HEK293 (cell line): ENCODE measurements at regions of chr18 and their contacts with region 1.

Region 1: DNA sequence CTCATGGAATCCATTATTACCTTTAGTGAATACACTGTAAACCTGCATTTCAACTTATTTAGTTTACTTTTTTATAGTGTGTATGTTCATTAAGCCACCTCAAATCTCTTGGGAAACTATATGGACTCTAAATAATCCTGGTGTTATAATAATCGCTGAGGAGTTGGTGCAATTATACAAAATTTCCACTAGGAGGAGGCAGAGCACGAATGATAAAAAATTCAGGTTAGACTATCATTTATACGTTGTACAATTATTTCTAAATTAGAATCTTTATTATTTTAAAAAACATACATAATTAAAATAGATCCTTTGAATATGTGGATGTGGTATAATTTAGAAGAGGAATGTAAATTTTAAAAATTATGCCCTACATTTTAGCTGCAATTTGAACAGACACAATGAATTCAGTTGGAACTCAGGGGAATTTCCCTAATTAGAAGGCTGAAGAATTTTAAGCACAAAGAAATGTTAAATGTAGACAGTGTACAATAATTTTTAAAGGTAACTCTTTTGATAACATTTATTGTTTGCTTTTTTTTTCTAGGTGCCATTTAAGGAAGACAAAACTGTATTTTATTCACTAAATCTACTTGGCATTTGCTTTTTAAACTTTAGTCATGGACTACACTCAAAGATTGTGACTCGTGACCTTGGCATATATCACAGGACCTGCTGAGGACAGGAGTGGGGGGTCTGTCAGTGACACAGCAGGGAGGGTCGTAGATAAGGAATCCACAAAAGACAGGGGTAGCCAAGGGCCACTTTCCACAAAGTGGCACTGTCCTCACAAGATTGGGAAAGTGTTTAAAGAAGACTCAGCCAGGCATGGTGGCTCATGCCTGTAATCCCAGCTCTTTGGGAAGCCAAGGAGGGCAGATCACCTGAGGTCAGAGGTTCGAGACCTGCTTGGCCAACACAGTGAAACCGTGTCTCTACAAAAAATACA is 45.5 kb downstream of the RAB12 start:
- H3K4me3 ChIP-seq: no peak overlapping the region
- H3K27ac ChIP-seq: no peak overlapping the region
- H3K4me1 ChIP-seq: no peaks in the 10 kb centered on the region
- CTCF ChIP-seq: 0 out of 2 replicates have a peak, but pooled peaks have one; percentile 9

Region 2: DNA sequence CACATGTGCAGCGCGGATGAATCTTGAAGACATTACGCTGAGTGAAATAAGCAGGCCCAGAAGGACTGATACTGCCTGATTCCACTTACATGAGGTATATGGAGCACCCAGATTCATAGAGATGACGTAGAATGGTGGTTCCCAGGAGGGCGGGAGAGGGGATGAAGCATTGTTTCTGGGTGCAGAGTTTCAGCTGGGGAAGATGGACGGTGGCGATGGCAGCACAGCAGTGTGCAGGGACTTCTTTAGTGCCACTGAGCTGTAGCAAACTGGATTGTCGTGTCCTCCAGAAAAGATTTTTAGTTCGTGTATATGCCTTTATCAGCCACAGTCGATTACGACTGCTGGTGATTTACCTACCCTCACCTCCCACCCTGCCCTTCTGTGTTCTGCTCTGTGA is 15.0 kb before region 1 on chr18:
- CTCF ChIA-PET with region 1: interaction called, 17 read pairs
- POLR2A ChIA-PET with region 1: no interaction called
- H3K4me3 ChIP-seq: no peak overlapping the region
- H3K27ac ChIP-seq: no peak overlapping the region
- H3K4me1 ChIP-seq: no peaks in the 10 kb centered on the region
- CTCF ChIP-seq: no peak

Region 3: DNA sequence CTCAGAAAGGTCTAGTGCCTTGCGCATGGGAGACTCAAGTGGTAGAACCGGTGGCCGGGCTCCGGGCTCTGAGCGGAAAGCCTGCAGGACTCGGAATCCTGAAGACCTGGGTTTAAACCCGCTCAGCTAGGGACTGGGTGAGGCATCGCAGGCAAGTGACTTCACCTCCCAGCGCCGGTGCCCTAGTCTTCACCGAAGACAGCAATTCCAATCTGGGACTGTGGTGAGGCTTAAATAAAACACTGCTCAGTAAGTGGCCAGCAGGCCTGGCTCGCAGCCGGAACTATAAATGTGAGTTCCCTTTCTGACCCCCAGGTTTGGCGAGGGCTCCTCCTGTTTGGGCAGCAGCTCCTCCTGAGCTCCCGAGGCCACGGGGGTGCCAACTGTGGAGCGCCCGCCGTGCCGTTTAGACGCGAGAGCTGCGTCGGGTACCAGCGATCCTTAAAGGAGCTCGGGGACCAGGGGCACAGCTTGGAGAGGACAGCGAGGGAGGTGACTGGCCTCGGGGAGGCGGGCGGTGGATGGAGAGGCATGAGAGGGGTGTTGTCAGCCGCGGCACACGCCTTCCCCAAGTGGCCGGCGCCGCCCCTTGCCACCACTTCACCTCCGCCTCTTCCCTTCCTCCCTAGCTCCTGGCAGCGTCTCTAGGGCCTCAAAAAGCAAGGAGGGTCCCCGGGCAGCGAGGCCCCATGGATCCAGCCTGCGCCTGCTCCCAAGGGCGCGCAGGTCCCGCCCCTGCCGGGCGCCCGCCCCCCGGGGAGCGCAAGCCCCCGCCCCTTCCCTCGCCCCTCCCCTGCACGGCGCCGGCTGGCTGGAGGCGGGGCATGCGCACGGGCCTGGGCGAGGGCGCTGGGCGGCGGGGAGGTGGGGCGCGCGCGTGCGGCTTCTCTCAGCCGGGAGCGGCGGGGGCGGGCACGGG is 49.8 kb after region 1 on chr18:
- CTCF ChIA-PET with region 1: interaction called, 13 read pairs
- POLR2A ChIA-PET with region 1: interaction called, 3 read pairs
- H3K4me3 ChIP-seq: peak overlapping the region; percentile 43
- H3K27ac ChIP-seq: peak overlapping the region; percentile 57; the same call in 1 of the 2 replicates
- H3K4me1 ChIP-seq: peaks cover 6% of the 10 kb centered on the region
- CTCF ChIP-seq: peak; percentile 53; the same call in 1 of the 2 replicates

Region 4: DNA sequence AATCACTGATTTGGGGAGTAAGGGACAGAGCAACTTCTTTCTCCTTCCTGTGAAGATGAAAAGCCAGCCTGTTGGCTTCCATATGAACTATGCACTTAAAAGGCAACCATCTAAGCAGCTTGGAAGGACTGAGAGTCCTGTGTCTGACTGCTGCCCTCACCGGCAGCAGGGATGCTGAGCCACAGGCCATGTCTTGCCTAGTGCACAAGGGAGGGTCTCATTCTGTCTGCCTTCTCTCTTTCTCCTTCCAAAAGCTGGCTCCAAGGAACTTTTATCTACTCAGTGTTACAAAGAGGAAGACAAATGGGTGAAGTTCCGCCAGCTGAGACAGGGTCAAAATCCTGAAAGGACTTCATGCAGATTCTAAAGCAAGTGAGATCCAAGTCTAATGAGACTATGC is 196.9 kb after region 1 on chr18:
- CTCF ChIA-PET with region 1: no interaction called
- POLR2A ChIA-PET with region 1: no interaction called
- H3K4me3 ChIP-seq: no peak overlapping the region
- H3K27ac ChIP-seq: no peak overlapping the region
- H3K4me1 ChIP-seq: no peaks in the 10 kb centered on the region
- CTCF ChIP-seq: no peak

Region 5: GRCh38 chr18:8982416-8983184 is 327.8 kb after region 1 on chr18:
- CTCF ChIA-PET with region 1: interaction called, 98 read pairs
- POLR2A ChIA-PET with region 1: no interaction called
- H3K4me3 ChIP-seq: no peak overlapping the region
- H3K27ac ChIP-seq: no peak overlapping the region
- H3K4me1 ChIP-seq: no peaks in the 10 kb centered on the region
- CTCF ChIP-seq: no peak; the same call in 1 of the 2 replicates

Region 6: DNA sequence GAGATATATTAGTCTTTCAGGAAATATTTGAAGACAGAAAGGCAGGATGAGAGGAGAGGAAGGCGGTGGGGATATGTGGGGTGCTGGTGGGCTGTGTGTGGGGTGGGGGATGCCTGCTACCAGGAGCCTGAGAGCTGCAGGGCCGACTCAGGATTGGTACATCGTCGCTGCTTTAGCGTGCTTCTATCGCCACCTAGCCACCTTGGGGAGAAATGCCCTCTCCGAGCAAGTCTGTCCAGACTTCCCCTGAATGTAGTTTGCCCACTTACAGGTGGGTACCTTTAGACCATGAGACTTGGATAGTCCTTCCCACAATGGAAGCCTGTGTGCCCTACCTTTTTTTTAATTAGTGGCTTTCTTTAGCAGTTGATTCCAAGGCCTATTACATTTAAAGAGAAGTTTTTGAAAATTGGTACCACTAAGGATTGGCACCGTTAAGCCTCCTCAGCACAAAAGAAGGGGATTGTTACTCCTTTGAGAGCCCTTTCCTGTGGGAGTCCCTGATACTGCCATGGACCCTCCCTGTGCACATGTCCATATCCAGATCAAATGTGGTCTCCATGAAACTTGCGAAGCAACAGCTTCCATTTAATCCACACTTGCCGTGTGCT is 333.6 kb after region 1 on chr18:
- CTCF ChIA-PET with region 1: interaction called, 98 read pairs
- POLR2A ChIA-PET with region 1: no interaction called
- H3K4me3 ChIP-seq: no peak overlapping the region
- H3K27ac ChIP-seq: no peak overlapping the region
- H3K4me1 ChIP-seq: no peaks in the 10 kb centered on the region
- CTCF ChIP-seq: peak; percentile 78